Activated naive CD4-positive, alpha-beta T cell treated with anti-CD3 and anti-CD28 coated beads for 36 hours (primary cell): ENCODE measurements at regions of chr3 and their contacts with region 1.

Region 1: GRCh38 chr3:33074217-33075067 is 22.5 kb downstream of the GLB1 start:
- DNase-seq: peak; percentile 84
- H3K4me3 Mint-ChIP-seq: no peak overlapping the region
- H3K27ac Mint-ChIP-seq: no peak overlapping the region
- H3K4me1 Mint-ChIP-seq: peaks cover 11% of the 10 kb centered on the region
- H3K27me3 Mint-ChIP-seq: no peaks in the 10 kb centered on the region

Region 2: DNA sequence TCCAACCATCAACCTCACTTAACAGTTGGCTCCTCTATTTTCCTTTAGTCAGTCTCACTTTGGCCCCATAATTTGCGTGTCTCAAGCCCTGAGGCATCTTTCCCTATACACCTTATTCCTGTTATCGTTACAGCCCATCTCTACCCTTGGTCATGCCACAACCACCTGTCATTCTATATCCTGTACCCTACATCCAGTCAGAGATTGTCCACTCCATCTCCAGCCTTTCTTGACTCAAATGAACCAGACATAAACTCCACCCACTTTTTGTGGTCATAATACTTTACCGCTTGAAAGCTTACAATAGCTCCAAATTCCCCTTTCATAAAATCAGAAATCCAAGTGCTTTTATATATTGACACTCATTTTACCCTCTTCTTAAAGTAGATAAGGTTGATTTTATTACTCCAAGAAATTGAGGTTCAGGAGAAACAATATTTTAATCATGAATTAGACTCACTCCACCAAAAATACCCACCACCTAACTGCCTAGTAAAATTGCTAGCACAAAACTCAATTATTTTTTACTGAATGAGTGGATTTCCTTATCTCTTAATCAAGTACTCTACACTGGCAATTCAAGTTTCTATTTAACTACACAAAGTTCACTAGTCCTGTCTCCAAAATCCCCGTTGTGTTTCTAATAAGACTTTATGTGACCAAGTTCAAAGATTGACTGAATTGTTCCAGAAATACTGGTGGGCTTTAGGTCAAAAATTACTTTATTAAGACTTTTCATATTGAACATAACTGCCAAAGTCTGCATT is 113.9 kb before region 1 on chr3:
- CTCF ChIA-PET with region 1: interaction called, 15 read pairs
- intact Hi-C with region 1: no loop called
- DNase-seq: no peak
- H3K4me3 Mint-ChIP-seq: no peak overlapping the region
- H3K27ac Mint-ChIP-seq: peak overlapping the region; percentile 75
- H3K4me1 Mint-ChIP-seq: peaks cover 61% of the 10 kb centered on the region
- H3K27me3 Mint-ChIP-seq: no peaks in the 10 kb centered on the region

Region 3: DNA sequence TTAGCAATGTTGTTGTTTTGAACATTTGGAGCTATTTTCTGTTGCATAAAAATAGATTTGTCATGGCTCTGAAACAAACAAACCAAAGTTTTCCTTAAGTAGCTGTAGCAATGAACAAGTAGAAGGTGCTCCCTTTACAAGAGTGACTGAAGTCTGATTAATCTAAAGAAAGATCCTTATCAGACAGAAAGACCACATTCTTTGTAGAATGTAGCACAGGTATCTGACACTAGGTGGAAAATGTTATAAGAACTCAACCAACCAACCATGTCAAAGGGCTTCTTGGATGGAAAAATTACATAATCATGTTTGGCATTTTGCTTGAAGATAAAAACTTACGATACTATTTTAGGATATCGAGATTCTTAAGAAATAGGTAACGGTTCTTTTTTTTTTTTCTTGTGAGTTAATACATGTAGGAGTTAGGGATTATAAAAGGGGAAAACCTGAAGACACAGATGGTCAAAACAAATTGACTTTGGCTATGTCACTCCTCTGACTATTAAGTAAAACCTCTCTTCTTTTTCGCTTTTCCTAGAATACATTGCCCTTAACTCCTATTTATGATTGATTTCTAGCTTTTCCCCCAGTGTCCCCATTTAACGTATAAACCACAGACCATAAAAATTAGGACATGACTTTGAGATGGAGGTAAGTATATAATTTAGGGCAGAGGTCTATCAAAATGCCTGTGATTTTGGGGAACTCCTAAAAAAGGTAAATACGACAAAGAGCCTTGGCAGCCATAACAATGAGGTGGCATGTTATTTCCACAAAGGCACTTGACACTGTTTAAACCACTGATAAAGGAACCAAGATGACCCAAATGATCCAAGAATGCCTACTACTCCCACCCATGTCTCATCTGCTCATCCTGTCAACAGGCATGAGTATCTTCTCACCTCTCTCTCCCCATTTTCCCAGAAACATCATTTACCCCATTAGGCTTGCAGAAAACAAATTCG is 51.0 kb before region 1 on chr3:
- CTCF ChIA-PET with region 1: interaction called, 9 read pairs
- intact Hi-C with region 1: loop called (anchors 1 kb)
- DNase-seq: no peak
- H3K4me3 Mint-ChIP-seq: peak overlapping the region; percentile 32
- H3K27ac Mint-ChIP-seq: peak overlapping the region; percentile 81
- H3K4me1 Mint-ChIP-seq: peaks cover 46% of the 10 kb centered on the region
- H3K27me3 Mint-ChIP-seq: no peaks in the 10 kb centered on the region

Region 4: DNA sequence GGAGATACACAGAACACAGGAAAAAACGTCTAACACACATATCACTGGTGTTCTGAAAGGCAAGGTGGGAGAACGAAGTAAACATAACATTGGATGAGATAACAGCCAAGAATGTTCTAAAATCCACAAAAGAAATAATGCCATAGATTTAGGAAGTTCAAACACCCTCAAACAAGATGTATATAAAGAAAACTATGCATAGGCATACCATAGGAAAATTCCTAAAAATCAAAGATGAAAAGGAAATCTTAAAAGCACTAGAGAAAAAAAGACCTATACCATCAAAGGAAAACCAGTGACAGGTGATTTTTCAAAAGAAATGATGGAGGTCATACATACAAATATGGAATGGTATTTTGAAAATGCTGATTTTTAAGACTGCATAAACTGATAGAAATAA is 34.8 kb before region 1 on chr3:
- CTCF ChIA-PET with region 1: interaction called, 10 read pairs
- intact Hi-C with region 1: no loop called
- DNase-seq: no peak
- H3K4me3 Mint-ChIP-seq: no peak overlapping the region
- H3K27ac Mint-ChIP-seq: no peak overlapping the region
- H3K4me1 Mint-ChIP-seq: peaks cover 17% of the 10 kb centered on the region
- H3K27me3 Mint-ChIP-seq: no peaks in the 10 kb centered on the region

Region 5: DNA sequence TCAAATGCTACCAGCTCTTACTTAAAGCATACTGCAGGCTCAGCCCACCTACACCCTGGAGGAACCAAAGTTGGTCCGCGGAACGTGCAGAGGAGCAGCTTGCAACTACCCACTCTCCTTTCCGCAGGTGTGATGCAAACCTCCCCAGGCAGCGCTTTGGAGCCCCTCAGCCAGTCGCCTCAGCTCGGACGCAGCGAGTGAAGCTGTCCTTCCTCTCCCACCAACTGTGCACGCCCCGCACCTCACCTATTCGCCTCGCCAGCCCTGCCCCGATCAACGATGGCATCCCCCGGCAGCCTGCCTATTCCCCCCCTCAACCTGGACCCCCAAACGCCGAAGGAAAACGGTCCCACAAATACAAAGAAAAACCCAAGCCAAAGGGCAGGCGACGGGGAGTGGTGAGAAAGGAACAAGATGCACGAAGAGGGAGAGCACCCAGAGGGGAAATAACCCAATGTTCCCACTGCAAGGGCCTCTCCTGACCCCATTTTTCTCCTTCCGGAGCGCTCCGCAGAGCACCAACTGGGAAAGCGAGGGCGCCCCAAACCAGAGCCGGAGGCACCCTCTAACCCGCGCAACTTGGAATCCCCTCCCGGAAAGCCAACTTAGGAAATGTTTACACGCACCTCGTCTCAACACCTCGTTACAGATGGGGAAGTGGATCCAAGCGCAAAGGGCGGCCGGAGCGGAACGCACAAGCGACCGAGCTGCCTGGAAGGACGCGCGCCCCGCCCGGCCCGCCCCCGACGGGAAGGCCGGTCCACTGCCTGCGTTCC is 21.8 kb after region 1 on chr3:
- CTCF ChIA-PET with region 1: interaction called, 21 read pairs
- intact Hi-C with region 1: no loop called
- DNase-seq: peak; percentile 68
- H3K4me3 Mint-ChIP-seq: peak overlapping the region; percentile 98
- H3K27ac Mint-ChIP-seq: peak overlapping the region; percentile 88
- H3K4me1 Mint-ChIP-seq: peaks cover 41% of the 10 kb centered on the region
- H3K27me3 Mint-ChIP-seq: no peaks in the 10 kb centered on the region